Endothelial cell of umbilical vein (primary cell): ENCODE measurements at regions of chr2 and their contacts with region 1.

Region 1: DNA sequence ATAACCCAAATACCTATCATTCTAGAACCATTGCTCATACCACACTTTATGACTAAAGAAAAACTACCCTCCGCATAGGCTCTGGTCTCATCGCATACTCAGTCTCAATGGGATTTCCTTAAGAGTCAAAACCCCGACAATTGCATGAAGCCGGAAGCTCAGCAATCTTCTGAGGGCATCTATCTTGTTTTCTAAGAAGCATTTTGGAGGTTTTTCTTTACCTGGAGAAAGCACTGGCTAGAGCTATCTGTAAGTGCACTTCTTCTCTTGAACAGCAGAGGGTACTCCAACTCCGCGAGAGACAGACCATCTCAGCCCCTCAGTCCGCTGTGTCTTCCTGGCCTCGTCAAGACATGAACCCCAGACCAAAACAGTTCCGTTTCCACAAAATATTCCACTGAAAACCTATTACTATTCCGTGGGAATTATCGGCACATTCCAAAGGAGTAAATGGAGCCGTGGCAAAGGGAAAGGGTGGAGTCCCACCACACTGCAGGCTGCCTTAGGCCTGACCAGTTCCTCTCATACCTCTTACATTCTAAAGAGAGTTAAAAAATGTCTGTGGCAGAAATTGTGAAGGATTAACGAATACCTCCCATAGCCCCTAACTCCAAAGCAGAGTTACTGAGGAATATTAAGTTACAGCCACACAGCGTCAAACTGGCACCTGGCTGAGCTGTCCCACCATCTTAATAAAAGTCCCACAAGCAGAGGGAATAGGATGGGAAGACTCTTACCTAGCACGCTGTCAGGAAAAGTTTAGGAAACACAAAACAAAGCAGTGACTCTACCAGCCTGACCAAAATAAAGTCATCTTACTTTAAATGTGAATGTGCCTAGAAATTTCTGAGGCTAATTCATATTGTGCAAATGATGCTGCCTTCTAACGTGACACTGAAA is 325.6 kb upstream of the VRK2 start:
- DNase-seq: peak; percentile 61
- H3K4me3 ChIP-seq: no peak overlapping the region
- H3K27ac ChIP-seq: no peak overlapping the region
- H3K4me1 ChIP-seq: no peaks in the 10 kb centered on the region
- H3K27me3 ChIP-seq: no peaks in the 10 kb centered on the region
- CTCF ChIP-seq: peak; percentile 65 to 80
- POLR2A ChIP-seq: no peak

Region 2: DNA sequence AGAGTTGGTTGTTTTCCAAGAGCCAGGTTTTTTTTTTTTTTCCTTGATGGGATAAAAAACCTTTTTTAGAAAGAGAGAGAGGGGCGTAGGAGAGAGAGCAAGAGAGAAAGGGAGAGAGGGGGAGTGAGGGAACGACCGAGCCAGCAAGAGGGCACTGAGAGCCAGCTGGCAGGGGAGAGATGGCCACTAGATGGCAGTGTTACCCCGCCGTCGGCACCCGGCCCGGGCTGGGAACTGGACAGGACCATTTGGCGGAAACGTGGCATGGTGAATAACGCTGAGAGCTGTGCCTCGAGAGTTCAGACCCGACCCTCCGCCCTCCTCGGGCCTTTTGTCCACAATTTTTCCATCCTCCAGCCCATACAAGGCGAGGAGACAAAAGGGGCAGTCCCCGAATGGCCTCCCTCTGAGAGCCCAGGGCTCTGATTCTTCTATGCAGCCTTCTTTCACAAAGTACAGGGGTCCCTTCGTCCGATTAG is 38.9 kb after region 1 on chr2:
- CTCF ChIA-PET with region 1: interaction called, 10 read pairs
- POLR2A ChIA-PET with region 1: no interaction called
- dilution Hi-C with region 1: no loop called
- intact Hi-C with region 1: no loop called
- DNase-seq: peak; percentile 77
- H3K4me3 ChIP-seq: peak overlapping the region in 1 of 3 experiments; percentile 23
- H3K27ac ChIP-seq: no peak overlapping the region
- H3K4me1 ChIP-seq: peaks cover 4% of the 10 kb centered on the region
- H3K27me3 ChIP-seq: peaks cover 1 to 5% of the 10 kb centered on the region in 2 experiments
- CTCF ChIP-seq: peak; percentile 85 to 96
- POLR2A ChIP-seq: no peak

Region 3: DNA sequence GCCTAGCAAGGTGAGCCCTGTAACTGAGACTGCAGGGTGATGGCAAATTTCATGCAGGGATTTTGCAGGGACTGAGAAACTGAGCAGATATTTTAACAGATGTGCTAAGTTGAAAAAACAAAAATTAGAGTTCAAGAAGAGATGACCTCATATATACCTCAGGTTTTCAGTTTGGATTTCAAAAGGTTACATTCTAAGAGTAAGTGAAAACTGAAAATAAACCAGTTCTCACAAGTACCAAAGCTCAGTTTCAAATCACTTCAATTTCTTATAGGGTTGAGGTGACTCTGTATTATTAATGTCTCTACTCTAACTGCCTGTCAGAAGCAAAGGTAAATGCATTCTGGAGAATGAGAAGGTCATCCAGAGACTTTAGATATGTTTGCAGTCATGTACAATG is 88.3 kb after region 1 on chr2:
- CTCF ChIA-PET with region 1: no interaction called
- POLR2A ChIA-PET with region 1: no interaction called
- dilution Hi-C with region 1: no loop called
- intact Hi-C with region 1: no loop called
- DNase-seq: no peak
- H3K4me3 ChIP-seq: no peak overlapping the region
- H3K27ac ChIP-seq: no peak overlapping the region
- H3K4me1 ChIP-seq: no peaks in the 10 kb centered on the region
- H3K27me3 ChIP-seq: peaks cover 0 to 5% of the 10 kb centered on the region in 2 experiments
- CTCF ChIP-seq: no peak
- POLR2A ChIP-seq: no peak